ENCODE measurements at regions of chr4 and their contacts with region 1.

Region 1: DNA sequence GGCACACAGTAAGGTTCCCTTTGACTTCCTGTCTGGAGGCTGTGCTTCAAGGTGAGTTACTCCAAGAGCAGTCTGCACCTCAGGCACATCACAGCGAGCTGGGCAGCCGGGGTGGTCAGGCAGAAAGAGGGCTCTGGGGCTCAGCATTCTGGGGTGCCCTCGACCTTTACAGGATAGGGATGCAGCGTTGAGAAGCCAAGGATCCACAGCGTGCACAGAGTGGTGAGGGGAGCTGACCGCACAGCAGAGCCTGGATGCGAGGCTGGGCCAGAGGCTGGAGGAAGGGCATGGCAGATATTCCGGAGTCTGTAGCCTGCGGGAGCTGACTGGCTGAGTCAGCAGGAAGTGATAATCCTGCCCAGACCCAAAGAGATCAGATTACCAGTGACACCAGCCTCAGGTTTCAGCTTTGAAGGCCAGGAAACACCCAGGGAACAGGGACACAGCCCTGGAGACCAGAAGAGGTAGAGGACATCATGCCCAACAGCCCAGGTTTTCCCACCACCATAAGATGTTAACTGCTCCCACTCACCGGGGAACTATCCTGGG is 38.4 kb upstream of the PDLIM3 start:
- DNase-seq: no peak
- CTCF ChIP-seq: no peak

Region 2: DNA sequence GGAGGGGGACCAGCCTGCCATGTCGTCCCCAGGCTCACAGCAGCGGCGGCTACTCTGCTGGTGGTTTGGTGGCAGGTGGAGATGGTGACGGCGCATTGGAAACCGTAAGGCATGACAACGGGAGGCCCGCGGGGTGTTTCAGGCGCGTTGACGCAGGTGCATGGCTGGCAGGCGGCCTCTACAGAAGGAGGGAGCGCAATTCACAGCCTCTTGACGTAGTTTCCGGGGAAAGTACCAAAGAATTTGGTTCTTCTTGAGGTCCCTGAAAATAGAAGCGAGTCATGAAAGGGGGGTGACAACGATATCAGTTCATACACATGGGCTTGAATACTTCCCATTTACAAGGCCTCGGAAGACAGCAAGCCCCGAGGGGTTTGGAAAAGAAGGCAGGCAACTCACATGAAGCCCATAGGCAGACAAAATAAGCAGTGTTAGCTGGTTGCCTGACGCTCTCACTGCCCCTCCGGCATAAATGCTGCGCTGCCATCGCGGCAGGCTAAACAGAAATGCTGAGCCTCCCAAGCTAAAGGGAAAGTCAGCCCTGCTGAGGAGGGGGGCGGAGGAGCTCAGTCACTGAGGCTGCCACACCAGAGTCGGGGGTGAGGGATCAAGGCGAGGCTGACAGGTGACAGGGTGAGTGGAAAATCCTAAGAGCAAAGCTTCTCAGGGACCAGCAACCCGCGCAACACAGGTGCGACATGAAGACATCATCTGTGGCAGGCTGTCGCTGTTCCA is 13.9 kb after region 1 on chr4:
- CTCF ChIA-PET with region 1: interaction called, 26 read pairs
- POLR2A ChIA-PET with region 1: no interaction called
- DNase-seq: peak; percentile 86
- CTCF ChIP-seq: no peak

Measured in GM10248 (cell line).